ENCODE measurements at regions of chr10 and their contacts with region 1.

Region 1: DNA sequence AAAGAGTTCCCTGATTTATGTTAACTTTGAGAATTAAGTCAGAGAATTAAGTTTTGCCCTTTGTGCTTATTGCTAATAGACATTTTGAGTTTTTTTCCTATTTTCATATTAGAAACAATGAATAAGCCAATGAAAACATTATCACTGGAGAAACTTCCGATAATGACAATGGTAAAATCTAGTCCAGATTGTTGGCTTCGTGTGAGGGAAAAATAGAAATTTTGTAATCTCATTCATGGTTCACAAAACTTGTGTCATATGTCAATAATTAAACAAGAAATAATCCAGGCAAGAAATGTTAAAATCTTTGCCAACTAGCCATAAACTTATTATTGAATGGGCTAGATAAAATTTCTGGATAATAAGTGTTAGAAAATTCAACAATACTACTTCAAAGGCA is 36.7 kb downstream of the RNLS start:
- DNase-seq: no peak
- ATAC-seq: no peak

Region 2: DNA sequence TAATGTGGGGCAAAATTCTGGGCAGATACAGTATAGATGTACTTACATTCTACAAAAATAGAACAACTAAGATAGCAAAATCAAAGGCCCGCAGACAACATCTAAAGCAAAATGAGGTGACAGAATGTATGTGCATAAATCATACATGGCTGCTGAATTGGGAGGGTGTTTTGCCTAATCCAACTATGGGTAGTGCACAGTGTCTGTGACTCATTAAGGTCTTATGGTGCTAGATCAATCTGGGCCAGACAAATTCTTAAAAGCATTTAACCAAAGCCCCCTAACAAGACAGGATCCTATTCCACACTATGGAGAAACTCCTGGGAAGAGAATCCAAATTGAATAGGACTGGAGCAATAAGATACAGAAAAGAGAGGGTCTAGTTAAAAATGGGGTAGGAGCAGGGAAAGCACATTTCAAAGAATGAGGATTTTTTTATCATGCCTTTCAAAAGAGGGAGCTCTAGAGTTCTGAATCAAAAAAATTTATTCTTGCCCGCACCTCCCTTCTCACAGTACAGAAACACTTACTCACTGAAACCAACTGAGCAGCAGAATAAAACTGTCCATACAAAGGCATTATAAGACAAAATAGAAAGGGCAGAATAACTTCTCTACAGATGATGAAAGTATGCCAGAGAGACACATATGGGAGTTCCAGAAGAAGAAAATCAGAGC is 144.7 kb before region 1 on chr10:
- intact Hi-C with region 1: loop called (anchors 5 kb)
- DNase-seq: no peak
- ATAC-seq: no peak

Region 3: GRCh38 chr10:88450201-88450600 is 96.3 kb before region 1 on chr10:
- intact Hi-C with region 1: no loop called
- DNase-seq: no peak
- ATAC-seq: no peak

Measured in Right ventricle myocardium inferior (tissue), 1 donor.